H1 (cell line): ENCODE measurements at regions of chr3 and their contacts with region 1.

Region 1: DNA sequence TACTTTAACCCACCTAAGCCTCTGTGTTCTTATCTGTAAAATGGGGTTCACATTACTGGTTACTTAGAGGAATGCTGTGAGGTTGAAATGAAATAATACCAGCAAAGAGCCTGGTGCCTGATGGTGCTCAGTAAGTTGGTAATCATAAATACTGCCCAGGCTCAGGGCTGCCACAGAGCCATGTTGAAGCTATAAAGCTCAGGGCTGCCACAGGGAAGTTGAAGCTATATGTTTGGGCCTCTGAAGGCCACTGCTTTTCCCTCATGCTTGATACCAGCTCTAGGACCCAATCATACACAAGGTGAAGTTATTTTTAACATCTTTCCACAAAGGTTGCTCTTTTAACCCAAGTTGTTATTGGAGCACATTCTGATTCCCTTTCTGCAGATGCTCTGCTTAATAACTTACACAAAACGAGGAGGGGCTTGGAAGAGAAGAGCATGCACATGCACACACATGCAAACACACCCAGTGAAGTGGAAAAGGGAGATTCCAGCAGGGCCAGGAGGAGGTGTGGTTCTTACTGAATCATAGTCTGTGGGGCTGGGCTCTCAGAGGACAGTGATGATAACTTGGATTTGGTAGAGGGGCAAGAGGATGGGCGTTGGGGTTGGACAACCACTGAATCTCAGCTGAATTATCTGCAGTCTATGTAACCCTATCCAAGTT is 17.4 kb downstream of the PARP14 start:
- DNase-seq: no peak
- H3K4me3 ChIP-seq: no peak overlapping the region
- H3K27ac ChIP-seq: no peak overlapping the region
- H3K4me1 ChIP-seq: no peaks in the 10 kb centered on the region
- H3K27me3 ChIP-seq: no peaks in the 10 kb centered on the region
- CTCF ChIP-seq: no peak
- EP300 ChIP-seq: no peak
- POLR2A ChIP-seq: no peak
- RAD21 ChIP-seq: no peak

Region 2: GRCh38 chr3:122589297-122589696 is 108.8 kb before region 1 on chr3:
- CTCF ChIA-PET with region 1: no interaction called
- POLR2A ChIA-PET with region 1: no interaction called
- DNase-seq: no peak
- H3K4me3 ChIP-seq: no peak overlapping the region
- H3K27ac ChIP-seq: no peak overlapping the region
- H3K4me1 ChIP-seq: peaks cover 0 to 2% (median 0%) of the 10 kb centered on the region in 4 experiments; a peak in 1 of 7 replicates
- H3K27me3 ChIP-seq: no peaks in the 10 kb centered on the region
- CTCF ChIP-seq: no peak
- EP300 ChIP-seq: no peak
- POLR2A ChIP-seq: no peak
- RAD21 ChIP-seq: no peak

Region 3: DNA sequence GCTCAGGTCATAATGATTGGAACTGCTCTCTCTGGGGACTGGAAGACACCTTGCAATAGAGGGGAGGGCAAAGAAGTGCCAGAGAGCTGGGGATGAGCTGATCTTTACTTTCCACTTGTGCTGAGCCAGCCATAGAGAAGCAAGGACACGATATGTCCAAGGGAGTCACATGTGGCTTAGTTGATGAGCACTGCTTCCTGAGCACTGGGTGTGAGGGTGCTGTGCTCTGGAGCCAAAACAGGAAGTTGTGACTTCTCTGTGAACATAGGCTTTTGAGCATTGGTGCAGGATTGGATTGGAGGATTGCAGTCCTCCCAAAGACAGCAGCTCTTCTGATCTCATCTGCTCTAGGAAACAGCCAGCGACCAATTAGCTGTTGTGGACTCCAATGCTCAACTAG is 10.8 kb before region 1 on chr3:
- CTCF ChIA-PET with region 1: interaction called, 10 read pairs
- POLR2A ChIA-PET with region 1: interaction called, 3 read pairs
- DNase-seq: no peak
- H3K4me3 ChIP-seq: no peak overlapping the region
- H3K27ac ChIP-seq: no peak overlapping the region
- H3K4me1 ChIP-seq: no peaks in the 10 kb centered on the region
- H3K27me3 ChIP-seq: no peaks in the 10 kb centered on the region
- CTCF ChIP-seq: no peak
- EP300 ChIP-seq: no peak
- POLR2A ChIP-seq: no peak
- RAD21 ChIP-seq: no peak